ENCODE measurements at regions of chr17 and their contacts with region 1.

Region 1: GRCh38 chr17:42832974-42833766 is at the start of gene PSME3:
- DNase-seq: peak; percentile 94
- H3K4me3 ChIP-seq: peak within 1 kb of the TSS; percentile 79 to 83
- H3K27ac ChIP-seq: peak within 1 kb of the TSS; percentile 74 to 86
- H3K4me1 ChIP-seq: peaks cover 4 to 9% of the 10 kb centered on the region in 2 experiments; a peak in 3 of 4 replicates
- H3K27me3 ChIP-seq: no peaks in the 10 kb centered on the region
- CTCF ChIP-seq: peak; percentile 14; the same call in 1 of the 2 replicates
- EP300 ChIP-seq: peak in 1 of 2 experiments; percentile 10; a peak in 1 of 4 replicates
- RAD21 ChIP-seq: no peak
- polyA plus RNA-seq, gene PSME3: 139 and 152 TPM in 2 replicates

Region 2: GRCh38 chr17:42779936-42780850 is 53.0 kb before region 1 on chr17 and contains the start of gene WNK4:
- CTCF ChIA-PET with region 1: no interaction called
- POLR2A ChIA-PET with region 1: no interaction called
- DNase-seq: peak; percentile 89
- H3K4me3 ChIP-seq: peak within 1 kb of the TSS; percentile 61 to 84
- H3K27ac ChIP-seq: peak within 1 kb of the TSS in 1 of 2 experiments; percentile 46; a peak in 3 of 4 replicates
- H3K4me1 ChIP-seq: peaks cover 14 to 17% of the 10 kb centered on the region in 2 experiments; a peak in 3 of 4 replicates
- H3K27me3 ChIP-seq: no peaks in the 10 kb centered on the region
- CTCF ChIP-seq: no peak
- EP300 ChIP-seq: no peak
- RAD21 ChIP-seq: no peak
- polyA plus RNA-seq, gene WNK4: 8.7 and 12.5 TPM in 2 replicates

Region 3: DNA sequence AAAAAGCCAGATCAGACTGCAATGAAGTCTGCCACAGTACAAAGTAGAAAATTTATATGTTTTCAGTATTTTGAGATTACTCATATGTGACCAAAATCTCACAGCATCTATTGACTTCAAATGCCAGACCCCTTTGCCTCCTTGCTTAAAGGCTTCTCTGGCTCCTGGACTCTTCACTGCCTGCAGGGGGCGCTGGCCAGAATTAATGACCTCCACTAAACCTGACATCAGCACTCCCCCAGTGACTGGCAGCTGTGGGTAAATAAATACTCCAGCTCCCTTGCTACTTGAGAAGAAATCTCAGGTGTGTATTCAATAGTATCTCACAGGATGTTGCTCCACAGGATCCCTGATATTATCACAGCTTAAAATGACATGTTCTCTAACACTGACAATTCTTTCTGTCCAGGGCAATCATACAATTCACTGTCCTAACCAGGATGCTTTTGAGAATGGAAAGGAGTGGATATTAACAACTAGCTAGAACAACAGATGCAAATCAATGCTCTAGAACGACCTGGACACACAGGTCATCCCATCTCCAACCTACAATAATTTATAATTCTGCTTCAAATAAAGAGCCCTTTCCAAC is 13.1 kb before region 1 on chr17:
- CTCF ChIA-PET with region 1: interaction called, 33 read pairs
- POLR2A ChIA-PET with region 1: interaction called, 12 read pairs
- DNase-seq: peak; percentile 70
- H3K4me3 ChIP-seq: peak overlapping the region in 1 of 2 experiments; percentile 27; a peak in 1 of 4 replicates
- H3K27ac ChIP-seq: no peak overlapping the region
- H3K4me1 ChIP-seq: peaks cover 7 to 11% of the 10 kb centered on the region in 2 experiments
- H3K27me3 ChIP-seq: no peaks in the 10 kb centered on the region
- CTCF ChIP-seq: peak; percentile 89
- EP300 ChIP-seq: no peak
- RAD21 ChIP-seq: peak; percentile 40

Region 4: GRCh38 chr17:42920922-42921321 is 87.8 kb after region 1 on chr17:
- CTCF ChIA-PET with region 1: no interaction called
- POLR2A ChIA-PET with region 1: no interaction called
- DNase-seq: no peak
- H3K4me3 ChIP-seq: no peak overlapping the region
- H3K27ac ChIP-seq: no peak overlapping the region
- H3K4me1 ChIP-seq: no peaks in the 10 kb centered on the region
- H3K27me3 ChIP-seq: peaks cover 34% of the 10 kb centered on the region; the same call in 1 of the 2 replicates
- CTCF ChIP-seq: no peak
- EP300 ChIP-seq: no peak
- RAD21 ChIP-seq: no peak

Region 5: GRCh38 chr17:42937712-42938596 is 104.8 kb after region 1 on chr17:
- CTCF ChIA-PET with region 1: interaction called, 14 read pairs
- POLR2A ChIA-PET with region 1: no interaction called
- DNase-seq: peak; percentile 68
- H3K4me3 ChIP-seq: no peak overlapping the region; a peak in 1 of 4 replicates
- H3K27ac ChIP-seq: no peak overlapping the region
- H3K4me1 ChIP-seq: no peaks in the 10 kb centered on the region
- H3K27me3 ChIP-seq: peaks cover 4% of the 10 kb centered on the region; the same call in 1 of the 2 replicates
- CTCF ChIP-seq: peak; percentile 76
- EP300 ChIP-seq: no peak
- RAD21 ChIP-seq: peak; percentile 88